Ascending aorta (tissue), 2 donors: ENCODE measurements at regions of chr10 and their contacts with region 1.

Region 1: GRCh38 chr10:30591249-30591670 is 38.3 kb downstream of the LYZL2 start:
- DNase-seq: no peak
- H3K4me3 ChIP-seq: no peak overlapping the region
- H3K27ac ChIP-seq: no peak overlapping the region
- H3K4me1 ChIP-seq: no peaks in the 10 kb centered on the region
- H3K27me3 ChIP-seq: no peaks in the 10 kb centered on the region
- CTCF ChIP-seq: peak; percentile 79 to 83 (median 79)

Region 2: DNA sequence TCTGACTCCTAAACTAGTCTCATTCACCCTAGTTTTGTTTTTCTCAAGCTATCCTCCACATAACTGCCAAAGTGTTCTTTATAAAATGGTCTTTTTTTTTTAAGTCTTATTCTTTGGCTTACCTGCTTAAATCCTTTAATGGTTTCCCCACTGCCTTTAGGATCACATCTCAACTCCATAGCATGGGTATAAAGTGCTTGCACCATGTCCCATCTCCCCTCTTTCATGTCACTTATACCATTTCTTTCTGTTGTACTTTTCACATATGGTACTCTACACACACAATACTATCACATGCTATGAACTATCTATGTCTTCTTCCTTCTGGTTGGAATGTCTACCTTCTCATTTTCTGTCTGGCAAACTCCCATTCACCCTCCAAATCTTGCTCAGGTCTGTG is 247.3 kb before region 1 on chr10:
- intact Hi-C with region 1: no loop called
- DNase-seq: no peak
- H3K4me3 ChIP-seq: no peak overlapping the region
- H3K27ac ChIP-seq: no peak overlapping the region
- H3K4me1 ChIP-seq: peaks cover 6 to 7% of the 10 kb centered on the region in 2 donors
- H3K27me3 ChIP-seq: no peaks in the 10 kb centered on the region
- CTCF ChIP-seq: no peak

Region 3: GRCh38 chr10:30392564-30392990 is 198.7 kb before region 1 on chr10:
- intact Hi-C with region 1: loop called (anchors 1 kb)
- DNase-seq: peak in 1 of 2 donors; percentile 80
- H3K4me3 ChIP-seq: peak overlapping the region in 1 of 2 donors; percentile 1
- H3K27ac ChIP-seq: no peak overlapping the region
- H3K4me1 ChIP-seq: peaks cover 0 to 8% of the 10 kb centered on the region in 2 donors
- H3K27me3 ChIP-seq: no peaks in the 10 kb centered on the region
- CTCF ChIP-seq: peak; percentile 87 to 96 (median 93)